B cell (primary cell): ENCODE measurements at regions of chr11 and their contacts with region 1.

Region 1: GRCh38 chr11:78079232-78080083 is at the start of gene NDUFC2:
- DNase-seq: peak; percentile 76
- ATAC-seq: peak; percentile 86
- H3K4me3 ChIP-seq: peak within 1 kb of the TSS; percentile 89 to 96 (median 92)
- H3K4me3 Mint-ChIP-seq: peak within 1 kb of the TSS; percentile 93
- H3K27ac ChIP-seq: peak within 1 kb of the TSS; percentile 31 to 63
- H3K27ac Mint-ChIP-seq: peak within 1 kb of the TSS; percentile 86
- H3K4me1 ChIP-seq: peaks cover 18 to 35% of the 10 kb centered on the region in 2 donors
- H3K4me1 Mint-ChIP-seq: peaks cover 48% of the 10 kb centered on the region
- H3K27me3 ChIP-seq: no peaks in the 10 kb centered on the region
- H3K27me3 Mint-ChIP-seq: no peaks in the 10 kb centered on the region
- CTCF ChIP-seq: no peak
- total RNA-seq, gene NDUFC2: 39.4 and 49.0 TPM in 2 replicates

Region 2: DNA sequence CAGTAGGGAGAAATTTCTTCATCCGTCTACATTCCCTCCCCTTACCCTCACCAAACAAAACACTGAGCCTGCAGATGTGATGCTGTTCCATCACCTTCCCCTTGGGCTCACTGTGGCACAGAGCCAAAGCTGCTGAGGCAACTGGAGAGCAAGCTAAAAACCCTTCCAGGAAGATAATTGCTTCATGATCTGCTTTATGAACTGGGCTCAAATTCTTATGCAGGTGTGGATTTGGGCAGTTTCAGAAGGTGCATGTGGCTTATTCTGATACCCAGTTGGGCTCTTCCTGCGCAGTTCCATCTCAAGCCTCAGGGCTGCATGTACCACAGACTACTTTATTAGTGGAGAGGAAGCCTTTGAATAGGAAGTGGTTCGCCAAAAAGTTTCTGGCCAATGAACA is 200.2 kb before region 1 on chr11:
- CTCF ChIA-PET with region 1: no interaction called
- POLR2A ChIA-PET with region 1: no interaction called
- intact Hi-C with region 1: no loop called
- DNase-seq: peak; percentile 13
- ATAC-seq: no peak
- H3K4me3 ChIP-seq: no peak overlapping the region
- H3K4me3 Mint-ChIP-seq: no peak overlapping the region
- H3K27ac ChIP-seq: no peak overlapping the region
- H3K27ac Mint-ChIP-seq: no peak overlapping the region
- H3K4me1 ChIP-seq: peaks cover 10 to 11% of the 10 kb centered on the region in 2 donors
- H3K4me1 Mint-ChIP-seq: peaks cover 13% of the 10 kb centered on the region
- H3K27me3 ChIP-seq: no peaks in the 10 kb centered on the region
- H3K27me3 Mint-ChIP-seq: no peaks in the 10 kb centered on the region
- CTCF ChIP-seq: no peak

Region 3: DNA sequence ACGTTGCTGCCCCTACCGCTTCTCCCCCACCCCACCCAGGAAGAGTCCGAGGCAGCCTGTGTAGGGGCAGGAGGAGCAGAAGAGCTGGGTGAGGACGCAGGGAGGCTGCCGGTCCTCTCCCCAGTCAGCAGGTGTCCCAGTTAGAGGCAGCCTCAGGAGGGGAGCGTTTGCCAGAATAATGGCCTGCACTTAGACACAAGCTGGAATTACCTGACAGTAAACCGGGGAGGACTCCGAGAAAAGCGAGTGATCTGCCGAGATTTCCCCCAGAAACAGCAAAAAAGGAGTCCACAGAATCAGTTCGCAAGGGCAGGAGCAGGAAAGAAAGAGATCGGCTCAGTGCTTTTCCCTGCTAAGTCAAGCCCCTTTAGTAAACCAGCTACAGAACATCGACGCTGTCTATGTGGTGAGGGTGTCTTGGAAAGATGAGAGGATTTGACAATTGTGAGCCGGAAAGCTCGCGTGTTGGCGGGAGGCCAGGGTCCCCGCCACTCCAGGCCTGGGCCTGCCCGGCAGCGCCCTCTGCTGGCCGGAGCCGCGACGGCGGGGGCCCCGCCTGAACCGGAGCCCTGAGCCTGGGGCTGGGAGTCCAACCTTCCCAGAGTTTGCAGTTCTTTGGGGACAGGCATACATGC is 33.5 kb before region 1 on chr11:
- CTCF ChIA-PET with region 1: interaction called, 11 read pairs
- POLR2A ChIA-PET with region 1: no interaction called
- intact Hi-C with region 1: no loop called
- DNase-seq: peak; percentile 78
- ATAC-seq: peak; percentile 91
- H3K4me3 ChIP-seq: peak overlapping the region in 4 of 5 experiments; percentile 9 to 53 (median 30)
- H3K4me3 Mint-ChIP-seq: peak overlapping the region; percentile 79
- H3K27ac ChIP-seq: no peak overlapping the region
- H3K27ac Mint-ChIP-seq: no peak overlapping the region
- H3K4me1 ChIP-seq: peaks cover 4% of the 10 kb centered on the region in 2 donors
- H3K4me1 Mint-ChIP-seq: peaks cover 10% of the 10 kb centered on the region
- H3K27me3 ChIP-seq: peaks cover 0 to 3% (median 0%) of the 10 kb centered on the region in 4 experiments
- H3K27me3 Mint-ChIP-seq: peaks cover 10% of the 10 kb centered on the region
- CTCF ChIP-seq: peak; percentile 98

Region 4: GRCh38 chr11:78097666-78098385 is 18.4 kb after region 1 on chr11:
- CTCF ChIA-PET with region 1: no interaction called
- POLR2A ChIA-PET with region 1: no interaction called
- intact Hi-C with region 1: no loop called
- DNase-seq: no peak
- ATAC-seq: no peak
- H3K4me3 ChIP-seq: no peak overlapping the region
- H3K4me3 Mint-ChIP-seq: no peak overlapping the region
- H3K27ac ChIP-seq: no peak overlapping the region
- H3K27ac Mint-ChIP-seq: no peak overlapping the region
- H3K4me1 ChIP-seq: no peaks in the 10 kb centered on the region
- H3K4me1 Mint-ChIP-seq: no peaks in the 10 kb centered on the region
- H3K27me3 ChIP-seq: no peaks in the 10 kb centered on the region
- H3K27me3 Mint-ChIP-seq: no peaks in the 10 kb centered on the region
- CTCF ChIP-seq: no peak

Region 5: DNA sequence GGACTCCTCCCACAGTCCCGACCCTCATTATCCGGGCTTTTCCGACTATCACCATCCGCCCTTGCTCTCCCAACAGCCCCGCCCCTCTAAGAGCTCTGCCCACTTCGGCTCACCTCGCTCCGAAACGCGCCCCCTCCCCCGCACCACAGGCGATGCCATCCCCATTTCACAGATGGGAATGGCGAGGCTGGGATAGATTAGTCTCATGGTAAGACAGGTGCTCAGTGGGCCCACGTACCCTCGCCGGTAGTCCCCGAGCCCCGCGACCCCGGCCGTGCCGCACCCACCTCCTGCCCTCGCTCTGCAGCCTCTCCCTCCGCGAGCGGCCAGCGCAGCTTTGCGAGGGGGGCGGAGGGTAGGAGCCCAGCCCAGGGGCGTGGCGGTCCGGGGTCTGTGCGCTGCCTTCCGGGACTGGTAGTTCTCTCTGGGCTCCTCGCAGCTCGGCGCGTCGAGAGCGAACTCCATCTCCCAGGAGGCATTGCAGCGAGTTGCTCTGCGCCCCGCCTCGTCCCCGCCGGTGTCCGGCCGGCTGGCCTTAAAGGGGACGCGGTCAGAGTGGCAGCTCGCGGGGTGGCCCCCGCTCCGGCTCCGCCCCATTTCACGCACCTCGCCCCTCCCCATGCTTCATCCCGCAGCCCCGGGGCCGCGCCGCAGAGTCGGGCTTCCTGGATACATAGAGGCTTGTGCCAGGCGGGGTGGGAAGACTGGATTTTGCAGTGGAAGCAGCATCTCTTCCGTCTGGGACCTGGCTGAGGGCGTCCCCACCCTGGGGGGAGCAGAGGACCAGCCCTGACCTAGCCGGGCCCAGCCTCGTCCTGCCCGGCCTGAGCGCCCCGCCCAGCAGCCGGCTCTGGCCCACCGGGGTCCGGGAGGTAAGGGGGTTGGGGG is 109.1 kb after region 1 on chr11 and contains the starts of genes KCTD21 and USP35:
- CTCF ChIA-PET with region 1: no interaction called
- POLR2A ChIA-PET with region 1: interaction called, 3 read pairs
- intact Hi-C with region 1: loop called (anchors 1 kb)
- DNase-seq: peak; percentile 93
- ATAC-seq: peak; percentile 93
- H3K4me3 ChIP-seq: peak within 1 kb of the TSS; percentile 67 to 96 (median 90)
- H3K4me3 Mint-ChIP-seq: peak within 1 kb of the TSS; percentile 100
- H3K27ac ChIP-seq: peak within 1 kb of the TSS; percentile 55 to 77
- H3K27ac Mint-ChIP-seq: peak within 1 kb of the TSS; percentile 93
- H3K4me1 ChIP-seq: peaks cover 24 to 28% of the 10 kb centered on the region in 2 donors
- H3K4me1 Mint-ChIP-seq: peaks cover 45% of the 10 kb centered on the region
- H3K27me3 ChIP-seq: no peaks in the 10 kb centered on the region
- H3K27me3 Mint-ChIP-seq: no peaks in the 10 kb centered on the region
- CTCF ChIP-seq: no peak
- total RNA-seq, gene KCTD21: 6.3 and 8.0 TPM in 2 replicates
- total RNA-seq, gene USP35: 4.5 and 6.0 TPM in 2 replicates